ENCODE measurements at regions of chr10 and their contacts with region 1.

Region 1: GRCh38 chr10:95246579-95247051 is 44.2 kb downstream of the PDLIM1 start:
- DNase-seq: peak; percentile 88
- ATAC-seq: peak; percentile 85
- H3K4me3 ChIP-seq: no peak overlapping the region
- H3K4me3 Mint-ChIP-seq: no peak overlapping the region
- H3K27ac ChIP-seq: peak overlapping the region in 1 of 2 donors; percentile 0
- H3K27ac Mint-ChIP-seq: peak overlapping the region; percentile 59
- H3K4me1 ChIP-seq: peaks cover 7 to 14% of the 10 kb centered on the region in 2 donors
- H3K4me1 Mint-ChIP-seq: peaks cover 28% of the 10 kb centered on the region
- H3K27me3 ChIP-seq: no peaks in the 10 kb centered on the region
- H3K27me3 Mint-ChIP-seq: no peaks in the 10 kb centered on the region
- CTCF ChIP-seq: peak; percentile 89

Region 2: DNA sequence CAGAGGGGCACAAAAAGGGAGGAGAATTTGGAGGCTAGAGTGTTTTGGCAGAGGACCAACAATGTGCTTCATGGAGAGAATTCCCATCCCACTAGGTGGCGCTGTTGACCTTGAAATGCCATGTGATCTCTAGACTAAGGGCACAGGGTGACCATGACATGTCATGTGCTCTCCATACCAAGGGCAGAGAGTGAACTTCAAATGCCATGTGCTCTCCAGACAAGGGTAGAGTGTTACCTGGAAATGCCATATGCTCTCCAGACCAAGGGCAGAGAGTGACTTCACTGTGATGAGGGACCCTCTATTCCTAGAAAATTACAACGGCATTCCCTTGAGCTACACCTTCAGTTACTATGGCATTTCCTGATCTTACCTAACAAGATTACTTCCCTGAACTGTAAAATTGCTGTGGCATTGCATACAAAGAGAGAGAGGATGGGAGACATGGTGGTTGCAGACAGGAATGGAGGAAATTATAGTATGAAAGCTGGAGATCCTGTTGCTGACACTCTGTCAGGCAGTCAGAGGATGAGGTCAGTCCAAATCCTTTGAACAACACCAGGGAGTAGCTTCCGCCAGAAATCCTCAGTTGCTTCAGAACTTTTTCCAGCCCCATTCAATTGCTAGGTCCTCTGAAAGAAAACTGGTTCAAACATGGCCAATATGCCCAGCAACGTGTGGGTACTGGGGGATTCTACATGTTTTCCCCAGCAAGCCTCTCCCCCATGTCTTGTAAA is 113.4 kb before region 1 on chr10:
- CTCF ChIA-PET with region 1: interaction called, 24 read pairs
- POLR2A ChIA-PET with region 1: no interaction called
- intact Hi-C with region 1: no loop called
- DNase-seq: peak; percentile 78
- ATAC-seq: peak; percentile 47
- H3K4me3 ChIP-seq: no peak overlapping the region
- H3K4me3 Mint-ChIP-seq: no peak overlapping the region
- H3K27ac ChIP-seq: no peak overlapping the region
- H3K27ac Mint-ChIP-seq: no peak overlapping the region
- H3K4me1 ChIP-seq: no peaks in the 10 kb centered on the region
- H3K4me1 Mint-ChIP-seq: no peaks in the 10 kb centered on the region
- H3K27me3 ChIP-seq: no peaks in the 10 kb centered on the region
- H3K27me3 Mint-ChIP-seq: no peaks in the 10 kb centered on the region
- CTCF ChIP-seq: peak; percentile 90

Region 3: DNA sequence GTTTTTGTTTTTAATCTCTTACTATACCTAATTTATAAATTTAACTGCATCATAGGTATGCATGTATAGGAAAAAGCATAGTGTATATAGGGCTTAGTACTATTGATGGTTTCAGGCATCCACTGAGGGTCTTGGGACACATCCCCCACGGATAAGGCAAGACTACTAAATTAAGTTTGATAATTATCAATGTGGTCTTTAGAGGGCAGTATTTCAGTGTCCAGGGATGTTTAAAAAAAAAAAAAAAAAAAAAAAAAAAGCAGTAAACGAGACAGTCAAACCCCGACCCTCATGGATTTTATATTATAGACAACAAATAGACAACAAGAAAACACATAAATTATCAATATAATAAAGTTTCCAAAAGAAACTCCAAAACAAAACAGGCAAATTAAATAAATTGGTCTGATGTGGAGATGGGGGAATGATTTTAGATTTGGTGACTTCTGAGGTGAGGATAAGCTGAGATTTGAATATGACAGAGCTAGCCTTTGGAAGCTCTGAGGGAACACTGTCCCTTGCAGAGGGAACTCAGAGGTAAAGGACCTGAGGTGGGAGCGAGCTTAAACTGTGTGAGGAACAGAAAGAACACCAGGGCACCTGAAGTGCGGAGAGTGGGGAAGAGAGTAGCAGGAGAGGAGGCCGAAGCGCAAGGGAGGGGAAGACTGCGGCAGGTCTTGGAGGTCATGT is 37.8 kb before region 1 on chr10:
- CTCF ChIA-PET with region 1: interaction called, 15 read pairs
- POLR2A ChIA-PET with region 1: no interaction called
- intact Hi-C with region 1: no loop called
- DNase-seq: peak; percentile 29
- ATAC-seq: no peak
- H3K4me3 ChIP-seq: no peak overlapping the region
- H3K4me3 Mint-ChIP-seq: no peak overlapping the region
- H3K27ac ChIP-seq: no peak overlapping the region
- H3K27ac Mint-ChIP-seq: no peak overlapping the region
- H3K4me1 ChIP-seq: no peaks in the 10 kb centered on the region
- H3K4me1 Mint-ChIP-seq: no peaks in the 10 kb centered on the region
- H3K27me3 ChIP-seq: no peaks in the 10 kb centered on the region
- H3K27me3 Mint-ChIP-seq: no peaks in the 10 kb centered on the region
- CTCF ChIP-seq: peak; percentile 62

Region 4: GRCh38 chr10:95260397-95260881 is 13.8 kb after region 1 on chr10:
- CTCF ChIA-PET with region 1: interaction called, 20 read pairs
- POLR2A ChIA-PET with region 1: no interaction called
- intact Hi-C with region 1: no loop called
- DNase-seq: no peak
- ATAC-seq: no peak
- H3K4me3 ChIP-seq: no peak overlapping the region
- H3K4me3 Mint-ChIP-seq: no peak overlapping the region
- H3K27ac ChIP-seq: peak overlapping the region in 1 of 2 donors; percentile 41
- H3K27ac Mint-ChIP-seq: no peak overlapping the region
- H3K4me1 ChIP-seq: peaks cover 16 to 29% of the 10 kb centered on the region in 2 donors
- H3K4me1 Mint-ChIP-seq: peaks cover 33% of the 10 kb centered on the region
- H3K27me3 ChIP-seq: no peaks in the 10 kb centered on the region
- H3K27me3 Mint-ChIP-seq: no peaks in the 10 kb centered on the region
- CTCF ChIP-seq: no peak

Region 5: DNA sequence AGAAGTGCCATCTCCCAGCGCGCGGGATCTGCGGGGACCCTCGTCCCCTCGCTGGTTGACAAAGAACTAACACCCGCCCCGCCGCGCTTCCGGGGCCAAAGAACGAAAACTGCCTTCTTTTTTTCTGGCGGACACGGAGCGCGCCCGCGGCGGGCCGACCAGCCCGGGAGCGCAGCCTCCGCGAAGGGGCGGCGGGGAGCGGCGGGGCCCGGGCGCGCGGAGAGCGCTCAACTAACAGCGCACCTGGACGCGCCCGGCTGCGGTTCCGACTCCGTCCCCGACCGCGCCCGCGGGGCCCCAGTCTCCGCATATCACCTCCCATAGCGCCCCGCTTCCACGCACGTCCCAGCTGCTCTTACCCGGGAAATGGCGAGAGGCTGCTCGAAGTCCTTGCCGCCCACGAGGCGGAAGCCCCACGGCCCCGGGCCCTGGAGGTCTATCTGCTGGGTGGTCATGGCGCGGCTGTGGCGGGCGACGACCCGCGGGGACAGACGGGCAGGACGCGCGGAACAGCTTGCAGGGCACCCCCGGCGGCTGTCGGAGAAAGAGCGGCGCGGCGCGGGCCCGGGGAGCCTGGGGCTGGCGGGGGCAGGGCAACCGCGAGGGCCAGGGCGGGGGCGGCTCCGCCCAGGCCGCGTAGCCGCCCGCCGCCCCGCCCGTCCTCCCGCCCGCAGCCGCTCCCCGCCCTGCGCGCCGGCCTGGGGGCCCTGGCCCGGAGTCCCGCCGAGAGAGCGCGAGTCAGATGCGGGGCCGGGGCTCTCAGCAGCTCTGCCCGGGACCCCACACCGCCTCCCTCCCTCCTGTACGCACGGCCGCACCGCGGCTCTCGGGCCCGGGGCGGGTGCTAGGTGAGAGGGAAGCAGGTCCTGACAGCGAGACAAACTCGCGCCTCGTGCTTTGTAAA is 44.1 kb after region 1 on chr10 and contains the start of gene PDLIM1:
- CTCF ChIA-PET with region 1: interaction called, 40 read pairs
- POLR2A ChIA-PET with region 1: no interaction called
- intact Hi-C with region 1: loop called (anchors 2 kb)
- DNase-seq: peak; percentile 90
- ATAC-seq: peak; percentile 69
- H3K4me3 ChIP-seq: peak within 1 kb of the TSS; percentile 36 to 94 (median 91)
- H3K4me3 Mint-ChIP-seq: peak within 1 kb of the TSS; percentile 93
- H3K27ac ChIP-seq: peak within 1 kb of the TSS; percentile 89 to 93
- H3K27ac Mint-ChIP-seq: peak within 1 kb of the TSS; percentile 95
- H3K4me1 ChIP-seq: peaks cover 83 to 87% of the 10 kb centered on the region in 2 donors
- H3K4me1 Mint-ChIP-seq: peaks cover 83% of the 10 kb centered on the region
- H3K27me3 ChIP-seq: no peaks in the 10 kb centered on the region
- H3K27me3 Mint-ChIP-seq: no peaks in the 10 kb centered on the region
- CTCF ChIP-seq: peak; percentile 29
- total RNA-seq, gene PDLIM1: 123 and 126 TPM in 2 replicates

Region 6: DNA sequence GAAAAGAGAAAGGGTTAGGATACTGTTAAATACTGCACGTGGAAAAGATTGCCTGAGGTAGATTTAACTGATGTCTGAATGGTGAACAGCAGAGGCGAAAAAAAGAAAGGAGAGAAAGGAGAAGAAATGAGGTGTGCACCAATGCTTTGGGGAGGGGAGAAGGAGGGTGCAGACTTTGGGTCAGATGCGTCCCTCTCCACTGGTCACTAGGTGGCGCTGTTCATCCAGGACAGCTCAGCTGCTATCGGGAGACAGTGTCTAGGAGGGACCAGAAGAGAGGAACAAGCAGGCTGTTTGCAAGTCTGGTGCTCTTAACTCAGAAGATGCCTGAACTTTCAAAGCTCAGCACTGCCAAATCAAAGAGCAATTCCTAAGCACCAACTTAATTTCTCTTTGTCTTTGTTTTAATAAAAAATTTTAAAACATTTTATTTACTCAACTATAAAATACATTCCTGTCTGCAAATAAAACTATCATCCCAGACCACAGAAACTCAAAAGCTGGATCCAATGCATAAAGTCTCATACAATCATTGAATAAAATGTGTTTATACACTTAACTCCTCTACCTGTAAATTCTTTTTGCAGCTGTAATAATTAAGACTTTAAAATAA is 128.1 kb after region 1 on chr10:
- CTCF ChIA-PET with region 1: interaction called, 16 read pairs
- POLR2A ChIA-PET with region 1: no interaction called
- intact Hi-C with region 1: no loop called
- DNase-seq: peak; percentile 71
- ATAC-seq: peak; percentile 53
- H3K4me3 ChIP-seq: no peak overlapping the region
- H3K4me3 Mint-ChIP-seq: no peak overlapping the region
- H3K27ac ChIP-seq: no peak overlapping the region
- H3K27ac Mint-ChIP-seq: no peak overlapping the region
- H3K4me1 ChIP-seq: no peaks in the 10 kb centered on the region
- H3K4me1 Mint-ChIP-seq: no peaks in the 10 kb centered on the region
- H3K27me3 ChIP-seq: peaks cover 0 to 9% (median 1%) of the 10 kb centered on the region in 4 experiments
- H3K27me3 Mint-ChIP-seq: peaks cover 55% of the 10 kb centered on the region
- CTCF ChIP-seq: peak; percentile 63

Measured in B cell (primary cell).